AG04449 (cell line): ENCODE measurements at regions of chr19 and their contacts with region 1.

Region 1: DNA sequence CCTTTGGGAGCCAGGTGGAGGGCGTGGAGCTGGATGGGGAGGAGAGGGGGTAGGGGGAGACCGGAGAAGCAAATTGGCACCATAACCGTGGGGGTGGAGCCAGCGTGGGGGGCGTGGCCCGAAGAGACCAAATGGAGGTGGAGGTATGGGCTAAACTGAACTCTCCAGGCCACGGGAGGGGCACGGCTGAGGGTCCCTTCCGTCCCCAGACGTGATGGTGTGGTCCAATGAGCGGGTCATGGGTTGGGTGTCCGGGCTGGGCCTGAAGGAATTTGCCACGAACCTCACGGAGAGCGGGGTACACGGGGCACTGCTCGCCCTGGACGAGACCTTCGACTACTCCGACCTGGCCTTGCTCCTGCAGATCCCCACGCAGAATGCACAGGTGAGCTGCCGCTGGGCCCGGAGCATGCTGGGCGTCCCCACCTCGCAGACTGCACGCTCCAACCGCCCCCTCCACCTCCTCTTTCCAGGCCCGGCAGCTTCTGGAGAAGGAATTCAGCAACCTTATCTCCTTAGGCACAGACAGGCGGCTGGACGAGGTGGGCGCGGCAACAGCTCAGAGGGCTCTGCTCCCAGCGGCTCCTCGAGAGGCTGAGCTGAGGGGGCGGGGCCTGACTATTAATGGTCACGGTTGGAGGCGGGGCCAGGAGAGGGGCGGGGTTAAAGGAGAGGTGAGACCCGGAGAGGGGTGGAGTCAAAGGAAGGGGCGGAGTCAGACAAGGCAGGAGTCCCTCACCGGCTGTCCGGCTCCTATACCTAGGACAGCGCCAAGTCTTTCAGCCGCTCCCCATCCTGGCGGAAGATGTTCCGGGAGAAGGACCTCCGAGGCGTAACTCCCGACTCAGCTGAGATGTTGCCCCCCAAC is 6.2 kb downstream of the HRC start:
- DNase-seq: no peak
- H3K4me3 ChIP-seq: peak overlapping the region; percentile 95
- CTCF ChIP-seq: no peak

Region 2: DNA sequence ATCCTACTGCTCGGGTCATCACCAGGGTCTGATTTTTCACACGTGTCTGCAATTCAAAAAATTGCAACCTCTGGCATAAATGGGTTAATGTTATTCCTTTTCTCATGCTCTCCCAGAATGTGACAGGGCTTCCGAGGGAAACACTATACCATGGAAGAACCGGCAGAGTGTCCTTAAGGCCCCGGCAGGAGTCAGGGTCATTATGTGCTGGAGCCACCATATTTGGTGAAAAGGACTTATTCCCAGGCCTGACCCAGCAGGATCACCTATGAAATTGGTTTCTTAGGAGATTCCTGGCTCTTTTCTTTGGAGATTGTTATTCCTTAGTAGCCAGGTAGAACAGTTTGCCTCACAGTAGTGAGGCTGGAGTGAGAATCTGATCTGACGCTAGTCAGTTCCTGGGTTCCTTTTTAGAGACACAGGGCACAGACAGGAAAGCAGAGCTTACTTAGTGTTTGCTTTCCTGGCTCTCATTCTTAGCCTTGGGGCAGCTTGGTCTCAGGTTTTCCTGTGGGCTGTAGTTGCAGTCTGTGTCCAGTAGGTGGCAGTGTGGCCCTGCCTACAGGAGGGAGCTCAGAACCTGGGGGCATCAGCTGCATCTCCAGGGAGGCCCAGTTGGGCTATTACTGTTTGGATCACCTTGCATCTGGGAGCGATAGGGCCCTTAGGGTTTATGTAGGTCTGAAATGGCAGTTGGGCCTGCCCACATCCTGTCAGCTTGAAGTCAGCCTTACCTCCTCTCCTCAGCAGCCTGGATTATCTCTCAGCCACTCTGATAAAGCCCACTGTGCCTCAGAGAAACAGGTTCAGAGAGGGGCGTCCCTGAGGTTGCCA is 51.3 kb before region 1 on chr19:
- CTCF ChIA-PET with region 1: interaction called, 29 read pairs
- POLR2A ChIA-PET with region 1: no interaction called
- DNase-seq: peak; percentile 17
- H3K4me3 ChIP-seq: no peak overlapping the region
- CTCF ChIP-seq: peak; percentile 95

Region 3: GRCh38 chr19:49118565-49119410 is 30.2 kb before region 1 on chr19 and contains the start of gene C19orf73:
- CTCF ChIA-PET with region 1: interaction called, 21 read pairs
- POLR2A ChIA-PET with region 1: interaction called, 4 read pairs
- DNase-seq: peak; percentile 33
- H3K4me3 ChIP-seq: peak within 1 kb of the TSS; percentile 77
- CTCF ChIP-seq: peak; percentile 6

Region 4: GRCh38 chr19:49127674-49128544 is 21.1 kb before region 1 on chr19:
- CTCF ChIA-PET with region 1: interaction called, 32 read pairs
- POLR2A ChIA-PET with region 1: no interaction called
- DNase-seq: peak; percentile 56
- H3K4me3 ChIP-seq: peak overlapping the region; percentile 58
- CTCF ChIP-seq: peak; percentile 39

Region 5: DNA sequence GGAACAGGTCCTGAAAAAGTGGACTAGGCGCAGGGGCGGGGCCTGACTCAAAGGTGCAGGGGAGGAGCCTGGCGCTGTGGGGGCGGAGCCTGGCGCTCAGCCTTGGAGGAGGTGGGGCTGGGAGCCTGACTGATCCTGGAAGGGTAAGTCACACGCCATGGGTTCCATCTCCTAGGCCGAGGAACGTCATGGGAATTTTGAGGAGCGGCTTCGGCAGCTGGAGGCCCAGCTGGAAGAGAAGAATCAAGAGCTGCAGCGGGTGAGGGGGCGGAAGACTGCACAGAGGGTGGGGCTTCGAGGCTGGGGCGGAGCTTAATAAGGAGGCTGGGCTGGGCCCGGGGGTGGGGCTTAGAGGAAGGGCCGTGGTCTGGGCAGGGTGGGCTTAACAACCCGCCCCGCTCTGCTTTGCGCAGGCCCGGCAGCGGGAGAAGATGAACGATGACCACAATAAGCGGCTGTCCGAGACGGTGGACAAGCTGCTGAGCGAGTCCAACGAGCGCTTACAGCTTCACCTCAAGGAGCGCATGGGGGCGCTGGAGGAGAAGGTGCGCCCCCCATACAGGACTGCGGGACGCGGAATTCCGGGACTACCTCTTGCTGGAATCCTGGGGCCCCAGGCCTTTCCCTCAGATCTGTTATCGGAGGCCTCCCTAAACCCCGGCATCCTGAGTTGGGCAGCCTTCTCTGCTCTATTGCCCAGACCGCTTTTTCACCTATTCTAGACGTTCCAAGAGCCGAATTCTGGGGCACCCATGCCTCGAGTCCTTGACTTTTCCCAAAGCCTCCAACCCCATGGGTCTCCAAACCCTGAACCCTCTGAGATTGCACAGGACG is 15.2 kb before region 1 on chr19:
- CTCF ChIA-PET with region 1: interaction called, 36 read pairs
- POLR2A ChIA-PET with region 1: no interaction called
- DNase-seq: no peak
- H3K4me3 ChIP-seq: no peak overlapping the region
- CTCF ChIP-seq: no peak

Region 6: DNA sequence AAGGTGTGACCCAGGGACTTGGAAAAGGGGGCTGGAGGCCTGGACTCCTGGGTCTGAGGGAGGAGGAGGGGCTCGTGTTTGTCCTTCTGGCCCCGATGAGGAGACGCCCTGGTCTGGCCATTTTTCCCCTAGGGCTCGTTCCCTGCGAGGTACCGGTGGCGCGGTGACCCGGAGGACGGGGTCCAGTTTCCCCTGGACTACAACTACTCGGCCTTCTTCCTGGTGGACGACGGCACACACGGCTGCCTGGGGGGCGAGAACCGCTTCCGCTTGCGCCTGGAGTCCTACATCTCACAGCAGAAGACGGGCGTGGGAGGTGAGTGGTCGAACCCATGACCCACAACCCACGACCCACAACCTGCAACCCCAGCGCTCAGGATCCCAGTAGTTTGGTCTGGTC is 19.4 kb after region 1 on chr19:
- CTCF ChIA-PET with region 1: no interaction called
- POLR2A ChIA-PET with region 1: no interaction called
- DNase-seq: no peak
- H3K4me3 ChIP-seq: no peak overlapping the region
- CTCF ChIP-seq: no peak

Region 7: DNA sequence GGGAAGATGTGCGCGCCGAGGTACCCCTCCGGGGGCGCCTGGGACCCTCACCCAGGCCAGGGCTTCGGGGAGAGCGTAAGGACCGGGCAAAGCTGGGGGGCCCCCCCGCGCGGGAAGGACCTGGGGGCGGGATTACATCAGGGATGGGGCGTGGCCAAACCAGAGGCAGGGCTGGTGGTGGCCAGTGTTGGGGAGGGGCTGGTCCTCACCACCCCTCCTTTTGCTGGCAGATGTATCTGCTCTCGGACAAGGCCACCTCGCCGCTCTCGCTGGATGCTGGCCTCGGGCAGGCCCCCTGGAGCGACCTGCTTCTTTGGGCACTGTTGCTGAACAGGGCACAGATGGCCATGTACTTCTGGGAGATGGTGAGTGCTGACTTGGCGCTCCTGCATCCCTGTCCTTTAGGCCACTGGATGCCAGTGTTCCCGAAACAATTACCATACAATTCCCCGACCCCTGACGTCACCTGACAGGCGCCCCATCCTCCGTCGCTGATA is 33.9 kb after region 1 on chr19:
- CTCF ChIA-PET with region 1: interaction called, 10 read pairs
- POLR2A ChIA-PET with region 1: no interaction called
- DNase-seq: no peak
- H3K4me3 ChIP-seq: no peak overlapping the region
- CTCF ChIP-seq: no peak